Caco-2 (cell line): ENCODE measurements at regions of chr1 and their contacts with region 1.

Region 1: DNA sequence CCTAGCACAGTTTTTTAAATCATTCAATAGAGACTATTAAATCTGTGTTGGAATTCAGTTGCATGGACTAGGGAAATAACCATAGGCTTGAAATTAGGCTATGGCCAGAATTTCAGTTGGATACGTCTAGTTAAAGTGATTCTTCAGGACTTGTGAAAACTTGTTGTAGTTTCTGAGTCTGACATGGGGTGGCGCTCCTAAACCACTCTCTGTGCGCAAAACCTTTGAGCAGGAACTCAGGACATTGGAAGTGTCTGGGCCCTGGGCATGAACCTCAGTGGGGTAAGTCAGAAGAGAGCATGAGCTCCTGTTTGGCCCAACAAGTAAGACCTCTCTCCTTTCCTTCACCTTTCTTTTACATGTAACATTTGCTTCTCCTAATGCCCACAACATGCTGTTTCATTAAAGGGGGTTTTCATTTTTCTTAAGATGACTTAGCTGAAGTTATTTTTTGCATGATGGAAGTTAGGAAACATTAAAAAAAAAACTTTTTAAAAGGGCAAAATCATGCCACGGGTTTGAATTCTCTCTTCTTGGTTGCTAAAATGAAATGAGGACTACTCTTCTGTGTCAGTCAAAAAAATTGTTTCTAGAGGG is 17.1 kb upstream of the CCDC190 start:
- DNase-seq: peak; percentile 72 to 74
- H3K4me3 ChIP-seq: no peak overlapping the region
- H3K4me3 Mint-ChIP-seq: no peak overlapping the region
- H3K27ac Mint-ChIP-seq: no peak overlapping the region
- H3K4me1 ChIP-seq: peaks cover 12% of the 10 kb centered on the region
- H3K4me1 Mint-ChIP-seq: no peaks in the 10 kb centered on the region
- H3K27me3 ChIP-seq: no peaks in the 10 kb centered on the region
- H3K27me3 Mint-ChIP-seq: no peaks in the 10 kb centered on the region
- CTCF ChIP-seq: peak; percentile 70 to 74

Region 2: GRCh38 chr1:162892906-162893611 is 15.0 kb after region 1 on chr1:
- CTCF ChIA-PET with region 1: no interaction called
- POLR2A ChIA-PET with region 1: no interaction called
- intact Hi-C with region 1: loop called (anchors 1 kb)
- DNase-seq: peak in 1 of 2 experiments; percentile 55
- H3K4me3 ChIP-seq: no peak overlapping the region
- H3K4me3 Mint-ChIP-seq: no peak overlapping the region
- H3K27ac Mint-ChIP-seq: peak overlapping the region; percentile 12
- H3K4me1 ChIP-seq: peaks cover 13% of the 10 kb centered on the region
- H3K4me1 Mint-ChIP-seq: peaks cover 12% of the 10 kb centered on the region
- H3K27me3 ChIP-seq: no peaks in the 10 kb centered on the region
- H3K27me3 Mint-ChIP-seq: no peaks in the 10 kb centered on the region
- CTCF ChIP-seq: no peak

Region 3: DNA sequence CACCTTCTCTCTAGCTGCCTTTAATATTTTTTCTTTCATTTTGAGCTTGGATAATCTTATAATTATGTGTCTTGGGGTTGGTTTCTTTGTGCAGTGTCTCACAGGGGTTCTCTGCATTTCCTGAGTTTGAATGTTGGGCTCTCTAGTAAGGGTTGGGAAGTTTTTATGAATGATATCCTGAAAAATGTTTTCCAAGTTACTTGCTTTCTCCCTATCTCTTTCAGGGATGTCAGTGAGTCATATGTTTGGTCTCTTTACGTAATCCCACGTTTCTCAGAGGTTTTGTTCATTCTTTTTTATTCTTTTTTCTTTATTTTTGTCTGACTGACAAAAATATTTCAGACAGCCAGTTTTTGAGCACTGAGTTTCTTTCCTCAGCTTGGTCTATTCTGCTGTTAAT is 38.3 kb after region 1 on chr1:
- CTCF ChIA-PET with region 1: no interaction called
- POLR2A ChIA-PET with region 1: no interaction called
- intact Hi-C with region 1: loop called (anchors 2 kb)
- DNase-seq: no peak
- H3K4me3 ChIP-seq: no peak overlapping the region
- H3K4me3 Mint-ChIP-seq: no peak overlapping the region
- H3K27ac Mint-ChIP-seq: no peak overlapping the region
- H3K4me1 ChIP-seq: peaks cover 10% of the 10 kb centered on the region
- H3K4me1 Mint-ChIP-seq: peaks cover 12% of the 10 kb centered on the region
- H3K27me3 ChIP-seq: no peaks in the 10 kb centered on the region
- H3K27me3 Mint-ChIP-seq: no peaks in the 10 kb centered on the region
- CTCF ChIP-seq: no peak

Region 4: DNA sequence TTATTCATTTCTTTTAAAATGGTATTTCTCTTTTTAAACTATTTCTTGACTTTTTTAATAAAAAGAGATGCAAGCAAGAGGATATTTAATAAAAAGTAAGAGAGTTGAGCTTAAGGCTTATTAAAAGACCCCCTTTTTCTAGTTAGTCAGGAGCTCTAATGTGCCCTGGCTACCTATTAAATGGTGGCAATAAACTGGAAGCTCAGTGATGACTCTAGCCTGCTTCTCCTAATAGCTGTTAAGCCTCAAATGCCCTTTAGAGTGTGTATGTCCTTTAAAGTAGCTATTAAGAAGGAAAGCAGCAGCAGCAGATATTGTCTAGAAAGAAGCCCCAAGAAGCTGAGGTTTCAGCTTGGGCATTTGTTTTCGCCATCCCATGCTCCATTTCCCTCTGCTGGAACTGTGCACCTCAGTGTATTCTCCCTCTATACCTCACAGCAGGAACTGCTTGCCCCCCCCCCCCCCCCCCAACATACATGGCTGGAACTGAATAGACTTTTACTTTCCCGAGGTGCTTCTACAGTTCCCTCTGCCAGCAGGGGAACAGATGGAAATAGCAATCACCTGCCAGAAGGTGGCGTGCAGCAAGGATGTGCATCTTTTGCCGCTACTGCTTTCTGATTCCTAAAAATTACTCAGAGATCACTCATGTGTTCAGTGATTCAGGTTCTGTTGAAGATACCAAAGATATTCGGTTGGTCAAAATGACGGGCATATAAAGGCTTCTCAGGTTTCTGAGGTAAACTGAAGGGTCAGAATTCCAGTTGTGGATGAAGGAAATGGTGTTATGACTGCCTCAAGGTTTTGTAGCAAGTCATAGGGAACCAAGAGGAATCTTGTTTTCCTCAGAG is 193.5 kb after region 1 on chr1:
- CTCF ChIA-PET with region 1: interaction called, 17 read pairs
- POLR2A ChIA-PET with region 1: no interaction called
- intact Hi-C with region 1: loop called (anchors 1 kb)
- DNase-seq: peak; percentile 67 to 69
- H3K4me3 ChIP-seq: no peak overlapping the region
- H3K4me3 Mint-ChIP-seq: no peak overlapping the region
- H3K27ac Mint-ChIP-seq: no peak overlapping the region
- H3K4me1 ChIP-seq: peaks cover 3% of the 10 kb centered on the region; the same call in 1 of the 2 replicates
- H3K4me1 Mint-ChIP-seq: no peaks in the 10 kb centered on the region
- H3K27me3 ChIP-seq: no peaks in the 10 kb centered on the region
- H3K27me3 Mint-ChIP-seq: peaks cover 13% of the 10 kb centered on the region
- CTCF ChIP-seq: peak; percentile 69 to 82

Region 5: GRCh38 chr1:163315773-163316374 is 437.8 kb after region 1 on chr1:
- CTCF ChIA-PET with region 1: interaction called, 4 read pairs
- POLR2A ChIA-PET with region 1: no interaction called
- intact Hi-C with region 1: loop called (anchors 1 kb)
- DNase-seq: peak in 1 of 2 experiments; percentile 38
- H3K4me3 ChIP-seq: no peak overlapping the region
- H3K4me3 Mint-ChIP-seq: no peak overlapping the region
- H3K27ac Mint-ChIP-seq: no peak overlapping the region
- H3K4me1 ChIP-seq: peaks cover 4% of the 10 kb centered on the region; the same call in 1 of the 2 replicates
- H3K4me1 Mint-ChIP-seq: peaks cover 4% of the 10 kb centered on the region
- H3K27me3 ChIP-seq: no peaks in the 10 kb centered on the region
- H3K27me3 Mint-ChIP-seq: no peaks in the 10 kb centered on the region
- CTCF ChIP-seq: peak; percentile 46 to 69

Region 6: GRCh38 chr1:163774401-163774945 is 896.4 kb after region 1 on chr1:
- CTCF ChIA-PET with region 1: no interaction called
- POLR2A ChIA-PET with region 1: no interaction called
- intact Hi-C with region 1: no loop called
- DNase-seq: no peak
- H3K4me3 ChIP-seq: no peak overlapping the region
- H3K4me3 Mint-ChIP-seq: no peak overlapping the region
- H3K27ac Mint-ChIP-seq: no peak overlapping the region
- H3K4me1 ChIP-seq: no peaks in the 10 kb centered on the region
- H3K4me1 Mint-ChIP-seq: no peaks in the 10 kb centered on the region
- H3K27me3 ChIP-seq: no peaks in the 10 kb centered on the region
- H3K27me3 Mint-ChIP-seq: no peaks in the 10 kb centered on the region
- CTCF ChIP-seq: no peak